Mammary epithelial cell (primary cell): ENCODE measurements at regions of chr5 and their contacts with region 1.

Region 1: DNA sequence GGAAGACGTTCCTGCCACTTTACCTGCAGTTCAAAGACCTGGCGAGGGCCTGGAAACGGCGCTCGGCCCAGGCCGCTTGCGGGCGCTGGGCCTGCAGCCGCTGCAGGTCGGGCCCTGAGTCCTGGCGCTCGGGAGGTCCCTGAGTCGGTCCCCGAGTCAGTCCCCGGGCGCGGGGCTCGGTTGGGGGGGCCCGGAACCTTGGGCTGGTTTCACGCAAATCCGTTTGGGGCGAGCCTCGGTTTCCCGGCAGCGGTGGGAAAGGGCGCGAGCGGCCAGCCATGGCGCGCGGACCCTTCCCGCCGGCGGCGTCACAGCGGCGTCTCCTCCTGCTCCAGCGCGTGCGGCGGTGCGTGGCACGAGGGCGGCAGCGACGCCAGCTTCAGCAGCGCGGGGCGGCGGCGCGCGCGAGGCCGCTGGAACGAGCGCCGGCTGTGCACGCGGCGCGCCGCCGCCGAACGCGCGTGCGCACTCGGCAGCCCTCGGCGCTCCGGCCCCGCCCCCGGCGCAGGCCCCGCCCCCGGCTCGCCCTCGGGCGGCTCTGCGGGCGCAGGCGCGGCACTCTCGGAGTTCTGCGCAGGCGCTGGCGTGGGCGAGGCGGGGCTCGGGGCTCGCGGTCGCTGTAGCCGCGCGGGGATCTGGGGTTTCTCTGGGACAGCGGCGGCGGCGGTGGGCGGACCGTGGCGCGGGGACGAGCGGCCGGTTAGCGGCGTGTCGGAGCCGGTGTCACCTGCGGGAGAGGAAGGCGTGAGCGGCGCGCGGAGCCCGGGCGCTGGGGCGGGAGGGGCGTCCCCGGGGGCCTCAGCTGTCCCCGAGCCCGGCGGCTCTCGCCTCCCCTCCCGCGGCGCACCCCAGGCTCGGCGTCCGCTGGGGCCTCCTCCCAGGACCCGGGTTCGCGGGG is 29.9 kb downstream of the EXOC3 start:
- DNase-seq: peak; percentile 66
- H3K4me3 ChIP-seq: peak overlapping the region; percentile 69 to 94 (median 73)
- H3K27ac ChIP-seq: peak overlapping the region; percentile 32
- H3K4me1 ChIP-seq: peaks cover 31% of the 10 kb centered on the region
- H3K27me3 ChIP-seq: no peaks in the 10 kb centered on the region
- CTCF ChIP-seq: no peak

Region 2: DNA sequence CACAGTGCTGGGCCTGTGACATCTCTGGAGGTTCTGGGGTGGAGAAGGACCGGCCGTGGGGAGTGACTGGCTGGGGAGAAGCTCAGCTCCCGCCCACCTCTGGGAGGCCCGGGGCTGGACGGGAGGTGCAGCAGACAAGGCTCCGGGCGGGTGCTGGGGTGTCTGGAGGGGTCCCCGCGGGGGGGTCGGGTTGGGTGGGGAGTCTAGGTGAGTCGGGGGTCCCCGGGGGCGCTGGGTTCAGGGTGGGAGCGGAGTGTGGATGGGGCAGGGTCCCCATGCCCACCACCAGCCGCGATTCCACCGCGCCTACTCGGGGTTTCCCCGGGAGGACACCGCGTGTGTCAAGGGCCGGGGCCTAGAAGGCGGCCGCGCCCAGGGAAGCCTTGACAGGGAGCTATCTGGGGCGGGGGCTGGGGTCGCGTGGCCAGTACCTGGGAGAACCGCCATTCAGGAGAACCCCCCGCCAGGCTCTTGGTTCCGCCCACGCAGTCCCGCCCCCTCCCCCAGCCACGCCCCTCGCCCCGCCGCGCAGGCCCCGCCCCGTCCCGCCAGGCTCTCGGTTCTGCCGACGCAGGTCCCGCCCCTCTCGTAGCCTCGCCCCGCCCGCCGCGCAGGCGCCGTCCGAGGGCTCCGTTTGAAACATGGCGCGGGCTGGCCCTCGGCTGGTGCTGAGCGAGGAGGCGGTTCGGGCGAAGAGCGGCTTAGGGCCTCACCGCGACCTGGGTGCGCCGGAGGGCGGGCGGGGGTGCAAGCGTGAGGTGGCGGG is 139.0 kb after region 1 on chr5 and contains the start of gene CEP72:
- CTCF ChIA-PET with region 1: no interaction called
- dilution Hi-C with region 1: no loop called
- in situ Hi-C with region 1: no loop called
- intact Hi-C with region 1: loop called (anchors 5 kb)
- DNase-seq: peak; percentile 81
- H3K4me3 ChIP-seq: peak within 1 kb of the TSS; percentile 74 to 94 (median 78)
- H3K27ac ChIP-seq: peak within 1 kb of the TSS; percentile 75
- H3K4me1 ChIP-seq: peaks cover 14% of the 10 kb centered on the region
- H3K27me3 ChIP-seq: no peaks in the 10 kb centered on the region
- CTCF ChIP-seq: no peak
- total RNA-seq, gene CEP72: 3.5 to 13.4 TPM